Activated CD4-positive, alpha-beta T cell treated with anti-CD3 and anti-CD28 coated beads, Interleukin-2, amount 10 ng/mL, durations not matched to agents 24 days and 14 days (primary cell): ENCODE measurements at regions of chr20 and their contacts with region 1.

Region 1: GRCh38 chr20:53578492-53579222 is 15.0 kb downstream of the ZNF217 start:
- DNase-seq: peak; percentile 92
- H3K4me3 Mint-ChIP-seq: peak overlapping the region; percentile 82
- H3K27ac Mint-ChIP-seq: peak overlapping the region; percentile 82
- H3K4me1 Mint-ChIP-seq: peaks cover 75% of the 10 kb centered on the region
- H3K27me3 Mint-ChIP-seq: no peaks in the 10 kb centered on the region

Region 2: DNA sequence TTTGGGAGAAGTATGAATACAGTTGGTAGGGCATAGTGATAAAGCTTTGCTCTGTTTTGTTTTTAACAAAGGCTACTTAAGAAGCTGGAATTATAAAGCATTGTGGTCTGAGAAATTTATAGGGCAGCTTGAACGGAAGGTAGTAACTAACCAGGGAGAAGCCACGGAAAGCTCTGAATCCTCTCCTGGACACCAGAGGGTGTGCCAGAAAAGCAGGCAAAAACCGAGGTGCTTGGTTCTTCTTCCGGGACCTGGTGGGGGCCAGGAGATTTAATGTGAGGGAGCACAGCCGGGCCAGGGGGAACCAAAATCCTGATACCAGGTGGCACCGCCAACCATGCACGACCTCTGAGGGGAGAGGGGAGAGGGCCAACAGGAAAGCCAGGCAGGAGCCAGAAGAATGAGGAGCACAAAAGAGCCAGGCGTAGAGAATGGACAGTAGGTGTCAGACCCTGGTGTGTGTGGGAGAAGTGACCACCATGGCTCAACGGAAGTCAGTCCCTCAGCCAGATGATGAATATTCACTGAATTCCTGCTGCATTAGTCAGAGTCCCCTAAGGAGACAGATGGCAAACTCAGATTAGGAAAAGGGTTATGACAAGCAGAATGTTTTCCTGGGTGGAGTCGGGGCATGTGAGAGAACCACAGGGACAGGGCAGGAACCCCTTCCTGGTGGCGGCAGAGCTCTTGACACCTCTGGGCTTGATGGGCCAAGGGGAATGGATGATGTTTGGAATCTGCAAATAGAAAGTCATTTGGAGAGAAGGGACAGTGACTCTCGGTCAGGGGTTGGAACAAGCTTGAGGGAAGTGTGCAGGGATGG is 247.3 kb before region 1 on chr20:
- intact Hi-C with region 1: no loop called
- DNase-seq: no peak
- H3K4me3 Mint-ChIP-seq: no peak overlapping the region
- H3K27ac Mint-ChIP-seq: no peak overlapping the region
- H3K4me1 Mint-ChIP-seq: peaks cover 3% of the 10 kb centered on the region
- H3K27me3 Mint-ChIP-seq: no peaks in the 10 kb centered on the region

Region 3: DNA sequence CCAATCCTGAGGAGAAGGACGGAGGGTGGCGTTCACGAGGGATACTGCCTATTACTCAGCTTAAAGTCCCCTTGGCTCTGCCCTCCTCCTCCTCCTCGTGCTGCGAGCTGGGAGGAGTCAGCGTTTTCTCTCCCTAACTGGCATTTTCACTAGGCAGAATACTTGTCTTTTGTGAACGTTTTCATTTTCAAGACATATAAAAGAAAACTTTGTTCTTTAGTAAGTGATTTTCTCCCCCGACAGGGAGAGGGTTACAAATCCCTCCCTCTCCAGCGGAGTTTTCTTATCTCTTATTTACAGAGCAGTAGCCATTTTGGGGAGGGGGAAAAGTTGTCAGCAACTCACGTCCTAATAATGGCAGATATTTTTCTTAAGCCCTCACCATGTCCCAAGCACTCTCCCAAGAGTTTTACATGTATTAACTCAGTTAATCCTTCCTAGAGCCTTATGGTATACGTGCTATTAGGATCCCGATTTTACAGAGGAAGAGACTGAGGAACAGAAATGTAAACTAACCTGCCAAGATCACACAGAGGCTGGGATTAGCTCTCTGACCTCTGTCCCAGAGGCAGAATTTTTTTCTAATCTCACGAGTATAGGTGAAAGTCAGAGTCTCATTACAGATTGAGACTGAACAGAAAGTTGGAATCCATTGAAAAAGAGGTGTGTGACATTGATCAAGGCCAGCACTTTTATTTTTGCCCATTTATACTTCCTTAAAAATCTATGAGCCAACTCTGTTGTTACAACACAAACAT is 45.0 kb after region 1 on chr20:
- intact Hi-C with region 1: loop called (anchors 5 kb)
- DNase-seq: peak; percentile 81
- H3K4me3 Mint-ChIP-seq: peak overlapping the region; percentile 81
- H3K27ac Mint-ChIP-seq: peak overlapping the region; percentile 98
- H3K4me1 Mint-ChIP-seq: peaks cover 36% of the 10 kb centered on the region
- H3K27me3 Mint-ChIP-seq: no peaks in the 10 kb centered on the region

Region 4: DNA sequence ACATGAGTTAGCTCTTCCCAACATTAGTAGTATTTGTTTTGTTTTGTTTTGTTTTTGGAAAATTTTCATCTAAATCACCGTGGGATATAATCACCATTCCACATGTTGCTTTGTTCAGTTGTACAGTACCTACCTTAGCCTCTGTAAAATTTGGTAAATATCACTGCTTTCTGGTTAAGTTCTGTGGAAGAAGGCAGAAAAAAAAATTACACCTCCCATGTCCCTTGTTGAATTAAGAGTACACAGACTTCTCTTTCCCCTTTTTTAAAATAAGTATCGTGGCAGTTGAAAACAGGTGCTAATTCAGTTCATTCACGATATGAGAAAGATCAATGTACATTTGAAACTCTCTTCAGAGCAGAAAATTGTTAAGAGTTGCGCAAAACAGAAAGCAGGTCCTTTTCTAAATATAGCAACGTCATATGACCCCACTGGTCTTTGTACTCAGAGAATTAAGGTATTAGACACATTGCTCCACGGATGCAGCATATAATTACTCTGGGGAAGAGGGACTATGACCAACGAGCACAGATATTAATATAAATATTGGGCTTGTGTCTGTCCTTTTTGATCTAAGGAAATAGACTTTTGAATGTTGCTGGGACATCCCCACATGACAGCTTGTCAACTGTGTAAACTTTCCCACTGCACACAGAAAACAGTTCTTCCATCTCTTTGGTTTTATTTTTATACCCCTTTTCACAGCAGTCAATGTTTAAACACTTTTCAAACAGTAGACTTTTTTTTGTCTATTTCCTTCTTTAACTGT is 73.6 kb after region 1 on chr20:
- intact Hi-C with region 1: loop called (anchors 1 kb)
- DNase-seq: peak; percentile 76
- H3K4me3 Mint-ChIP-seq: peak overlapping the region; percentile 87
- H3K27ac Mint-ChIP-seq: peak overlapping the region; percentile 99
- H3K4me1 Mint-ChIP-seq: peaks cover 40% of the 10 kb centered on the region
- H3K27me3 Mint-ChIP-seq: no peaks in the 10 kb centered on the region

Region 5: DNA sequence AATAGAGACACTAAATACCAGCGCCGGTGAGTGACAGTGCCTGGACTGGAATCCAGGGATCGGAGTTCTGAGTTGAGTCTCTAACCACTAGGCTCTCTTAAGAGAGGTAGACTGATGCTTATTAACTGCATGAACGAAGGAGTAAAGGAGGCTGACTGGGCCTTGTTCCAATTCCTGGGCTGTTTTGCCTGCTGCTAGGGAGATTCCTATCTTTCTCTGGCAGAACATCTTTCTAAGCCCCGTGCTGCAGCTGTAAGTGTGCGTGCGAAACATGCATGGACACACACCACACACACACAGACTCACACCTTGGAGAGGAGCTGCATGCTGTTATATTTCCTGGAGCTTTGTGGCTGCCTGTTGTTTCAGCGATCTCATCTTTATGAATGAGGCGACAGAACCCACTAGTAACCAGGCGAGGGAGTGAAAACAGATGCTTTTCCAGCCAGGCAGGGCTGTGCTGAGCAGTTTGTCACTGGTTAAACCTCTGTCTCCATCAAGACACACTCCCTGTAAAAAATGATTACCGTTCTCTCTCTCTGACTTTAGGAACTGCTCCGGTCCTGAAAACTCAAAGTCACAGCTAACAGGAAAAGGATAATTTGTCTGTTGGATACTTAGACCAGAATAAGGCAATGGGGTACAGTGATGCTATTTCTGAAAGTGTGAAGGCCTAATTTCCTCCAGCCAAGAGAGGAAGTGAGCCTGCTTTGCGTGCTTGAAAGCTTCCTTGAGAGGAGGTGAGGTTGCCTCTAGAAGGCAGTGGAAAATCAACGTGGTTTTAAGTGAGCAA is 172.4 kb after region 1 on chr20:
- intact Hi-C with region 1: loop called (anchors 1 kb)
- DNase-seq: peak; percentile 89
- H3K4me3 Mint-ChIP-seq: peak overlapping the region; percentile 51
- H3K27ac Mint-ChIP-seq: peak overlapping the region; percentile 98
- H3K4me1 Mint-ChIP-seq: peaks cover 63% of the 10 kb centered on the region
- H3K27me3 Mint-ChIP-seq: no peaks in the 10 kb centered on the region

Region 6: DNA sequence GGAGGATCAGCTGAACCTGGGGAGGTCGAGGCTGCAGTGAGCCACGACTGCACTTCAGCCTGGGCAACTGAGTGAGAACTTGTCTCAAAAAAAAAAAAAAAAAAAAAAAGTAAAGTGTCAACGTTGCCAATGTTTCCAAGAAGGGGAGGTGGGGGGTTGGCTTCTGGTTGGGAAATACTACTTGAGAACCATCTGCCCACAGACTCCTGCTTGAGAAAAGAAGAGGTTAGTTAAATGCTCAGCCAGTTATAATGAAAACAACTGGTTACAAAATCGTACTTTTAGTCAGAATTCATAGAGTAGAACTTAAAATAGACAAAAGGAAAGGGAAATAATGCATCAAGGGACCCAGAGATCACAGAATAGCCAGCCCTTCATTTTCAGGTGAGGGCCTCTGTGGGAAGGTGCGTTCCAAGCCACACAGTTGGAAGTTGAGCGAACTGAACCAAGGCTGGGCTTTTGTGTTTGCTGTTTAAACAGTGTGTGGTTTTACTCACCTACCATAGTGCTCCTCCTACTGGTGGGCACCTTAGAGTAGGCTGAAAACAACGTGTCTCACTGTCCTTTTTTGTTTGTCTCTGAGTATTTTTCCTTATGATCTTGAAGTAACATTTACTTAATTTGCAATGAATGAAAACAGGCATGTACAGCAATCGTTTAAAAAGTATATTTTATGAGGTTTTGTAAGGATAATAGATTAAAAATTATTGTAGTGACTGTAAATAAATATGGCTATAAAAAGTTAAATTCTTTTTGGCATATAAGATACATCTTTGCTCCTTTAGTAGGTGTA is 291.0 kb after region 1 on chr20:
- intact Hi-C with region 1: loop called (anchors 1 kb)
- DNase-seq: peak; percentile 92
- H3K4me3 Mint-ChIP-seq: peak overlapping the region; percentile 57
- H3K27ac Mint-ChIP-seq: peak overlapping the region; percentile 92
- H3K4me1 Mint-ChIP-seq: peaks cover 63% of the 10 kb centered on the region
- H3K27me3 Mint-ChIP-seq: no peaks in the 10 kb centered on the region

Region 7: DNA sequence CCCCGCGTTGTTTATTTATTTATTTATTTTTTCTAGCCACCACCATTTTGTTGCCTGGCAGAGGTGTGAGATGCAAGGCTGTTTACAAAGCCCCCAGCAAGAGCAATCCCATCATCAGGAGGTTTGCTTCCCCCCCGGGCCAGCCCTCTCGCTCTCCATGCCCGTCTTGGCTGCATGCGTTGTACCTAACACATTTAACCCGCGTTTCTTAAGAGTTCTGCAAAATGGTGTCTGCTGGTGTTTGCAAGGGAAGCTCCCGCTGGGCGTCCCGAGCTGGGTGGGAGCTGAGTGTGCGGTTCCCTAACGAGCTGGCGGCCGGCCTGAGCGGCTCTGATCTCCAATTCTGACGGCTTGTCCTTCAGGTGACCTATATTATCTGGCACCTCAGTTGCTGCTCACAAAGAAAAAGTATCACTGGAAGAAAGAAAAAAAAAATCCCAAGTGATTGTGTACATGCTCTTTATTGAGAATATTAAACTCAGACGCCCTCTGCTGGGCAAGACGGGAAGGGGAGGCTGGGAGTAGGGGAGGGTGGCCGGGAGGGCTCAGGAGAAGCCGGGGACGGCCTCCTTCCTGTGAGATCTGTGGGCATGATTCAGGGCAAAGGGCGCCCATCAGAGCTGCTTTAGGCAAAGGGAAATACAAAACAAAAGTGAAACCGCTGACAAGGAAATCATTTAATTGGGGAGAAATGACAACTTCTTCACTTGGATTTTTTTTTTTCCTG is 337.0 kb after region 1 on chr20:
- intact Hi-C with region 1: loop called (anchors 1 kb)
- DNase-seq: peak; percentile 97
- H3K4me3 Mint-ChIP-seq: peak overlapping the region; percentile 93
- H3K27ac Mint-ChIP-seq: peak overlapping the region; percentile 91
- H3K4me1 Mint-ChIP-seq: peaks cover 37% of the 10 kb centered on the region
- H3K27me3 Mint-ChIP-seq: no peaks in the 10 kb centered on the region

Region 8: DNA sequence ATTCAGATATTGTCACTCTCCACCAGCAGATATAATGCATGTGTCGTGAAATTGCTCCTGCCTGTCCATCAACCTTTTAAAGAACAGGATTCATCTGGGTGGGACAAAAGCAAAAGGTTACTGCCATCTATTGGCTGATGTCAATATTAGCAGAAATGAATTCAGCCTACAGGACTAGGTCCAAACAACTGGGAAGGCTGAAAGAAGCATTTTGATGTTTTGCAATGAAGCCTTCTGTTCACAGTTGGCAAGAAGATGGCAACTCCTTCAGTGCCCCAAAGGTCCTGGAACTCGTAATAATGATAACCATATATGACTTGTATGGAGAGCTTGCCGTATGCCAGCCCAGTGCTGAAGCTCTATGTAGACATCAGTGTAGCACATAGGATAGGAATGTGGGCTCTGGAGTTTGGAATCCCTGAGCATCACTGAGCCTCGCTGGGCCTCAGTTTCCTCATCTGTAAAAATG is 484.2 kb after region 1 on chr20:
- intact Hi-C with region 1: loop called (anchors 2 kb)
- DNase-seq: peak; percentile 72
- H3K4me3 Mint-ChIP-seq: no peak overlapping the region
- H3K27ac Mint-ChIP-seq: no peak overlapping the region
- H3K4me1 Mint-ChIP-seq: peaks cover 5% of the 10 kb centered on the region
- H3K27me3 Mint-ChIP-seq: peaks cover 6% of the 10 kb centered on the region